A549 (cell line): ENCODE measurements at regions of chr17 and their contacts with region 1.

Region 1: GRCh38 chr17:55348749-55349354 is 72.8 kb downstream of the MMD start:
- DNase-seq: peak; percentile 40 to 66
- ATAC-seq: peak; percentile 74 to 89; a peak in 5 of 6 replicates
- H3K4me3 ChIP-seq: no peak overlapping the region
- H3K27ac ChIP-seq: peak overlapping the region; percentile 23 to 56; a peak in 5 of 6 replicates
- H3K4me1 ChIP-seq: peaks cover 4% of the 10 kb centered on the region; the same call in 1 of the 3 replicates
- CTCF ChIP-seq: peak; percentile 94
- EP300 ChIP-seq: no peak
- POLR2A ChIP-seq: no peak
- RAD21 ChIP-seq: peak; percentile 83 to 86

Region 2: DNA sequence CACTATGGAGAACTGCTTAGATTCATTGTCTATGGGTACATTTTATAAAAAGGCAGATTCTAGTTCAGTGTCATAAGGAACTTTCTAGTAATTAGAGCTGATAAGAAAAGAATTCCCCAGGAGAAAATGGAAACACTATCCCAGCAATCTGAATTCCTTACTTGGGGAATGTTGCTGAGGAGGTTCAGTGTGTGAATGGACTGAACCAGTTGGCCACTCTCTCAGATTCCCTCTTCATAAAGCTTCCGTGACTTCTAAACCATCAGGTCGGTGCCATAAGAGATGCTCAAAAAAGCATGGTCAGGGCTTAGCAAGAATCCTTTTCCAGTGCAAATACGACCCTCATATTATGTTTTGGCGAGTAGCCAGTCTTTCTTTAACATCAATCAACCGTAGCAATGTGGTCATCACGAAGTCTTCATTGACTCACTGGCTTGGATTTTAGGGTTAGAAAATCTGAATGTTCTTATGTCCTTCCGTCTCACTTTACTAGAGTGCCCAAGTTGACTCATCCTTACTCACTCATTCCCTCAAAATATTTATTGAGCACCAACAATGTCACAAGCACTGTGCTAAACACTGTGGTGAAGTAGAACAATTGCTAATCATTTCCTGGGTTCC is 186.8 kb before region 1 on chr17:
- CTCF ChIA-PET with region 1: no interaction called
- POLR2A ChIA-PET with region 1: no interaction called
- DNase-seq: peak; percentile 13 to 56
- ATAC-seq: peak; percentile 52 to 81; a peak in 4 of 6 replicates
- H3K4me3 ChIP-seq: no peak overlapping the region
- H3K27ac ChIP-seq: no peak overlapping the region
- H3K4me1 ChIP-seq: peaks cover 13% of the 10 kb centered on the region
- CTCF ChIP-seq: no peak
- EP300 ChIP-seq: no peak
- POLR2A ChIP-seq: no peak
- RAD21 ChIP-seq: no peak

Region 3: GRCh38 chr17:55332289-55333041 is 16.4 kb before region 1 on chr17:
- CTCF ChIA-PET with region 1: interaction called, 19 read pairs
- POLR2A ChIA-PET with region 1: no interaction called
- DNase-seq: no peak
- ATAC-seq: no peak
- H3K4me3 ChIP-seq: no peak overlapping the region
- H3K27ac ChIP-seq: no peak overlapping the region
- H3K4me1 ChIP-seq: peaks cover 6% of the 10 kb centered on the region; the same call in 2 of the 3 replicates
- CTCF ChIP-seq: no peak
- EP300 ChIP-seq: no peak
- POLR2A ChIP-seq: no peak
- RAD21 ChIP-seq: no peak

Region 4: GRCh38 chr17:55366020-55366481 is 17.2 kb after region 1 on chr17:
- CTCF ChIA-PET with region 1: interaction called, 92 read pairs
- POLR2A ChIA-PET with region 1: no interaction called
- DNase-seq: no peak
- ATAC-seq: no peak
- H3K4me3 ChIP-seq: no peak overlapping the region
- H3K27ac ChIP-seq: no peak overlapping the region
- H3K4me1 ChIP-seq: no peaks in the 10 kb centered on the region
- CTCF ChIP-seq: no peak
- EP300 ChIP-seq: no peak
- POLR2A ChIP-seq: no peak
- RAD21 ChIP-seq: no peak